Activated naive CD4-positive, alpha-beta T cell treated with anti-CD3 and anti-CD28 coated beads for 36 hours (primary cell): ENCODE measurements at regions of chr3 and their contacts with region 1.

Region 1: DNA sequence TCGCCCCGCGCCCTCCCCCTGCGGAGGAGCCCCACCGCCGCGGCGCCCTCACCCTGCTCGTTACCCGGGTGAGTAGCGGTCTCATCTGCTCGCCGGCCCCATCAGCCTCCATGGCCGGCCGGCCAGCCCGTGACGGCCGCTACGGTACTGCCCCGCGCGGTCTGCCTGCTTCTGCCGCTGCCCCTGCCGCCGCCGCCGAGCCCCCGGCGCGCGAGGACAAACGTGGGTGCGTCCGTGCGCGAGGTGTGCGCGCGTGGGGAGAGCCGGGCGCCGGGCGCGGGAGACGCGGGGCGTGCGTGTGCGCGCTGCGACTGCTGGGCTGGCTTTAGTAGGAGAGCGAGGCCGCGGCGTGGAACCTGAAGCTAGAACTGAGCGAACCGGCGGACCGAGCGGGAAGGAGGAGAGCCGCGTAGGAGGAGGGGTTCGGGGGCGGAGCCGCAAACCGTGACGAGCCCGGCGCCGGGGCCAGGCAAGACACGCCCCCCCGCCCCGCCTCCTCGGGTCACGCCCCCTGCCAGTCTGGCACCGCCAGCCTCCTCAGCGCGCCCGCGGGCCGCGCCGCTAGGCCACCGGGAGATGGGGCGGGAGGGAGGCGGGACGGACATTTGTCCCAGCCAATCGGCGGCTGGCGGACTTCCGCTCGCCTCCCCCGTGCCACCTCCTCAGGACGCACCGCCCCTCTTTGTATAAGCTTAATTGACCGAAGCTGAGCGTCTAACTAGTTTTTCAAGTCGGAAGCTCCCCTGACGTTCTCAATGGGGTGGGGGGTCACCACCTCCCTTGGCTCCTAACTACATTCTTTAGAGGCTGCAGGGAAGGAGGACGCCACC is at the start of gene SLC4A7:
- DNase-seq: peak; percentile 98
- H3K4me3 Mint-ChIP-seq: peak within 1 kb of the TSS; percentile 98
- H3K27ac Mint-ChIP-seq: peak within 1 kb of the TSS; percentile 91
- H3K4me1 Mint-ChIP-seq: peaks cover 31% of the 10 kb centered on the region
- H3K27me3 Mint-ChIP-seq: no peaks in the 10 kb centered on the region
- total RNA-seq, gene SLC4A7: 37.0 to 39.0 TPM

Region 2: GRCh38 chr3:27141668-27142067 is 342.6 kb before region 1 on chr3:
- CTCF ChIA-PET with region 1: no interaction called
- intact Hi-C with region 1: no loop called
- DNase-seq: no peak
- H3K4me3 Mint-ChIP-seq: no peak overlapping the region
- H3K27ac Mint-ChIP-seq: no peak overlapping the region
- H3K4me1 Mint-ChIP-seq: no peaks in the 10 kb centered on the region
- H3K27me3 Mint-ChIP-seq: no peaks in the 10 kb centered on the region

Region 3: GRCh38 chr3:27357665-27358258 is 126.5 kb before region 1 on chr3:
- CTCF ChIA-PET with region 1: no interaction called
- intact Hi-C with region 1: loop called (anchors 5 kb)
- DNase-seq: peak; percentile 79
- H3K4me3 Mint-ChIP-seq: no peak overlapping the region
- H3K27ac Mint-ChIP-seq: no peak overlapping the region
- H3K4me1 Mint-ChIP-seq: peaks cover 15% of the 10 kb centered on the region
- H3K27me3 Mint-ChIP-seq: no peaks in the 10 kb centered on the region

Region 4: DNA sequence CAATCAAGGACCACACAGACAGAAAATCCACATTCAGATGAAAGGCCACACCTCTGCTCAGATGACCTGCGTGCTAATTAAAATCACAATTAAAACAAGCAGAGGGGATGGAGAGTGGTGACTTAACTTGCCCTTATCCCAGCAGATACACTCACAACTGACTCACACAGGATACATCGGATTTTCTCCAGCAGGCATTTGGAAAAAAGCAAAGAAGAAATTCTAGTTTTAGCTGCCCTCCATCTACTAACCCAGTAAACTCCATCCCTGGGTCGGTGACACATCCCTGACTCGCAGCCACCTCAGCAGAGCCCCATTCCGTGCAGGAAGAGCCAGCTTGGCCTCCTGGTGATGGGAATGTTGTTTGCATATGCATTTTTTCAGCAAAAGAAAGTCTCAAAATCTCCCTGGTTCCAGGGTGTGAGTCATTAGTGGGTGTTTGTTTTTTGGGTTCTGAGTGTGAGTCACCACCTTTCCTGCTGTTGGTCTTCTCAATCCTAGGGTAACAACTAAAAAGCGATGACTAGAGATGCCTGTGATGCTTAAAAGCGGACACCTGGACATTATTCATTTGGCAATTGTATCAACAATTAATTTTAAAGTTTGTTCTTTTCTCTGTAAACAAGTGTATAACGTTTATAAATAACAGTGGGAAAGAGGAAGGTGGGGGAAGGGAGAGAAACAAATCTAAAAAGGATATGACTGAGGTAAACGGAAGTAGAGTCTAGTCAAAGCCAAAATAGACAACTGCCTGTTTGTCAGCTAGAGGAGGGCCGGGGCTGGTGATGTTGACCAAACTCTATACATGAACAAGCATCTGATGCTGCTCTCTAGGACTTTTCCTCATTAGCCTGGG is 49.7 kb after region 1 on chr3:
- CTCF ChIA-PET with region 1: interaction called, 3 read pairs
- intact Hi-C with region 1: loop called (anchors 1 kb)
- DNase-seq: peak; percentile 25
- H3K4me3 Mint-ChIP-seq: no peak overlapping the region
- H3K27ac Mint-ChIP-seq: peak overlapping the region; percentile 48
- H3K4me1 Mint-ChIP-seq: peaks cover 15% of the 10 kb centered on the region
- H3K27me3 Mint-ChIP-seq: no peaks in the 10 kb centered on the region

Region 5: GRCh38 chr3:27681245-27681748 is 197.1 kb after region 1 on chr3:
- CTCF ChIA-PET with region 1: interaction called, 11 read pairs
- intact Hi-C with region 1: loop called (anchors 1 kb)
- DNase-seq: peak; percentile 28
- H3K4me3 Mint-ChIP-seq: peak overlapping the region; percentile 73
- H3K27ac Mint-ChIP-seq: peak overlapping the region; percentile 83
- H3K4me1 Mint-ChIP-seq: peaks cover 23% of the 10 kb centered on the region
- H3K27me3 Mint-ChIP-seq: peaks cover 2% of the 10 kb centered on the region

Region 6: DNA sequence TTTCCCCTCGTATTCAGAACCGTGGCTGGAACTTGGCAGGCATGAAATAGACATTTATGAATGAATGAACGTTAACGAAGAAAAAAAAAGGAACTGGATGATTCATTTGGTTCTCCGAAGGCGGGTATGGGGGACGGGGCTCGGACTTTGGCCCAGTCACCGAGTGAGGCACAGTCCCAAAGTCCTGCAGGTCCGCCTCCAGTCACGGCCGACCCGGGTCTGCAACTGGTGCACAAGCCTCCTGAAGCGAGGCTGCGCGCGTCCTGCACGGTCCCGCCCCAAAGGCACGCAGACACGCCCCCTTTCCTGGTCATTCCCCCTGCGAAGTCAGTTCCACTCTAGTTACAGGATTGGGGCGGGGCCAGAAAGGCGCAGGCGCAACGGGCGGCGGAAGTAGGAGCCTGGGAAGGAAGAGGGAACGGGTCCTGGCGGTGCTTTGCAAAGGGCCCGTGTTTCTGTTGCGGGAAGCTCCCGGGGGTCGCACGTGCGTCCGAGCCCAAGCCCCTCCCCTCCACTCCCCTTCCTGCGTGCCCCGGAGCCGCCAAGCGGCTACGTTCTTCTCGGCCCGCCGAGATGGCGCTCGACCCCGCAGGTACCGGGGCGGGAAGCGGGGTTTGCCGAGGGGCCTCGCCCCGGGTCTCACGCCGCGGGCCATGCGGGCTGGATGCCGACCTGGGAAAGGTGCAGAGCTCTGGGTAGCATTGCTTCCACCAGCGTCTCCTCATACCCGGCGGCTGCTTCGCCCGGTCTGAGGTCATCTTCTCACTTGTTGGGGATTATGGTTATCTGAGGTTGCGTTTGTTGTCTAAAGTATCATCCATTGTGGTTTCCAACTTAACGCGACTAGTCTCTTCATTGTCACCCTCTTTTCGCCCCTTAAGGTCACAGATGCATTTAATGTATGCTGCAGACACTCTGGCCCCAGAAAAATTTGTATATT is 757.3 kb after region 1 on chr3 and contains the start of gene CMC1:
- CTCF ChIA-PET with region 1: no interaction called
- intact Hi-C with region 1: loop called (anchors 1 kb)
- DNase-seq: peak; percentile 97
- H3K4me3 Mint-ChIP-seq: peak within 1 kb of the TSS; percentile 88
- H3K27ac Mint-ChIP-seq: peak within 1 kb of the TSS; percentile 90
- H3K4me1 Mint-ChIP-seq: peaks cover 45% of the 10 kb centered on the region
- H3K27me3 Mint-ChIP-seq: no peaks in the 10 kb centered on the region
- total RNA-seq, gene CMC1: 27.6 to 28.6 TPM